Lower leg skin (tissue), 4 donors: ENCODE measurements at regions of chr17 and their contacts with region 1.

Region 1: GRCh38 chr17:72890711-72891110 is 201.8 kb downstream of the SLC39A11 start:
- DNase-seq: peak in 1 of 2 donors; percentile 0
- H3K4me3 ChIP-seq: no peak overlapping the region
- CTCF ChIP-seq: no peak
- POLR2A ChIP-seq: no peak

Region 2: GRCh38 chr17:72829883-72830282 is 60.8 kb before region 1 on chr17:
- intact Hi-C with region 1: no loop called
- DNase-seq: peak in 1 of 2 donors; percentile 18
- H3K4me3 ChIP-seq: no peak overlapping the region
- CTCF ChIP-seq: no peak
- POLR2A ChIP-seq: no peak

Region 3: DNA sequence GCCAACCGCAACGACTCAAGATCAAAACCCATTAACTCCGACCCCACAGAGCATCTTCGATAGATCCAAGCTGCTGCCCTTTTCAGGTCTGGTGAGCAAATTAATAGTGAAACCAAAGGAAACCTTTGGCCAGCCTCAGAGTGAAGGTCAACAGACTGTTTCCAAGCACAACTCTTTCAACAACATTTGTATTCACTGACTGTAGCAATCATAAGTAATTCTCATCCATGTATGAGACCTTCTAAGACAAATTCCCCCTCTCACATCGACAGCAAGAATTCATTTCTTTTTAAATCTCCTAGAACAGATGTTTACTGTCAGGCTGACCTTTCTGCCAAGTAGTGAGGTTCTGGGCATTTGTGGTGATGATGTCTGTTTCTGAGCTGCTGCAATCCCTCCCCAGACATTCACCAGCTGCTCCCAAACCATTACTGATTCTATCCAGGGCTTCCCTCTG is 137.6 kb after region 1 on chr17:
- intact Hi-C with region 1: loop called (anchors 10 kb)
- DNase-seq: no peak
- H3K4me3 ChIP-seq: no peak overlapping the region
- CTCF ChIP-seq: no peak
- POLR2A ChIP-seq: no peak